Mammary epithelial cell (primary cell): ENCODE measurements at regions of chr1 and their contacts with region 1.

Region 1: GRCh38 chr1:200038981-200039848 is 11.7 kb downstream of the NR5A2 start:
- DNase-seq: peak; percentile 32
- H3K4me3 ChIP-seq: peak overlapping the region; percentile 46 to 56 (median 50)
- H3K27ac ChIP-seq: no peak overlapping the region
- H3K4me1 ChIP-seq: peaks cover 21% of the 10 kb centered on the region
- H3K27me3 ChIP-seq: peaks cover 80% of the 10 kb centered on the region
- CTCF ChIP-seq: no peak

Region 2: GRCh38 chr1:200081151-200081968 is 42.1 kb after region 1 on chr1:
- CTCF ChIA-PET with region 1: no interaction called
- dilution Hi-C with region 1: loop called (anchors 10 kb)
- in situ Hi-C with region 1: no loop called
- intact Hi-C with region 1: no loop called
- DNase-seq: no peak
- H3K4me3 ChIP-seq: no peak overlapping the region
- H3K27ac ChIP-seq: no peak overlapping the region
- H3K4me1 ChIP-seq: peaks cover 1% of the 10 kb centered on the region
- H3K27me3 ChIP-seq: no peaks in the 10 kb centered on the region
- CTCF ChIP-seq: no peak

Region 3: GRCh38 chr1:200194477-200194876 is 155.3 kb after region 1 on chr1:
- CTCF ChIA-PET with region 1: no interaction called
- dilution Hi-C with region 1: no loop called
- in situ Hi-C with region 1: no loop called
- intact Hi-C with region 1: no loop called
- DNase-seq: no peak
- H3K4me3 ChIP-seq: no peak overlapping the region
- H3K27ac ChIP-seq: no peak overlapping the region
- H3K4me1 ChIP-seq: no peaks in the 10 kb centered on the region
- H3K27me3 ChIP-seq: peaks cover 5% of the 10 kb centered on the region
- CTCF ChIP-seq: no peak